ENCODE measurements at regions of chr2 and their contacts with region 1.

Region 1: DNA sequence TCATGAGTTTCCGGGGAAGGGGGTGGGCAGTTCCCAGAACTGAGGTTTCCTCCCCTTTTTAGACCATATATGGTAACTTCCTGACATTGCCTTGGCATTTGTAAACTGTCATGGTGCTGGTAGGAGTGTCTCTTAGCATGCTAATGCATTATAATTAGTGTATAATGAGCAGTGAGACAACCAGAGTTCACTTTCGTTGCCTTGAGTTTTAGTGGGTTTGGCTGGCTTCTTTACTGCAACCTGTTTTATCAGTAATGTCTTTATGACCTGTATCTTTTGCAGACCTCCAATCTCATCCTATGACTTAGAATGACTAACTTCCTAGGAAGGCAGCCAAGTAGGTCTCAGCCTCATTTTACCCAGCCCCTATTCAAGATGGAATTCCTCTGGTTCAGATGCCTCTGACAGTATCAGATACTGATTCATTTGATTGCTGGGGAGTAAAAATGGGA is 447.3 kb downstream of the XIRP2 start:
- DNase-seq: no peak
- H3K4me3 ChIP-seq: no peak overlapping the region
- CTCF ChIP-seq: no peak

Region 2: DNA sequence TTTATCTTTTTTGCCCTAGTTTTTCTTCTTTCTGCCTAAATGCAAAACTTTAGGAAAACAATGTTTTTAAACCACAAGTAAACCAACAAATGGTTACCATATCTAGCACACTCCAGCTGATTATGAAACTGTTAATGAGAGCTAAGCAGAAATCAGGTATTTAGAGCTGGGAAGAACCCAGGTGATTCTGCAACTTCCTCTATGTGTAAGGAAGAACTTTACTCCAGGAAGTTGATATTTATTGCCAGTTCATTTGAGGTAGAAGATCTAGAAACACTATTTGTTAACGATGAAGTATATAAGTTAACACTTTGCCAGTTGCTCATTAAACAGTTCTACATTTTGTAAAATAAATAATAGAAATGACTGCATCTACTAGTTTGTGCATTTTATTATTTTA is 37.5 kb before region 1 on chr2:
- in situ Hi-C with region 1: loop called (anchors 5 kb)
- DNase-seq: no peak
- H3K4me3 ChIP-seq: no peak overlapping the region
- CTCF ChIP-seq: no peak

Measured in astrocyte of the cerebellum (primary cell).